ENCODE measurements at regions of chr11 and their contacts with region 1.

Region 1: DNA sequence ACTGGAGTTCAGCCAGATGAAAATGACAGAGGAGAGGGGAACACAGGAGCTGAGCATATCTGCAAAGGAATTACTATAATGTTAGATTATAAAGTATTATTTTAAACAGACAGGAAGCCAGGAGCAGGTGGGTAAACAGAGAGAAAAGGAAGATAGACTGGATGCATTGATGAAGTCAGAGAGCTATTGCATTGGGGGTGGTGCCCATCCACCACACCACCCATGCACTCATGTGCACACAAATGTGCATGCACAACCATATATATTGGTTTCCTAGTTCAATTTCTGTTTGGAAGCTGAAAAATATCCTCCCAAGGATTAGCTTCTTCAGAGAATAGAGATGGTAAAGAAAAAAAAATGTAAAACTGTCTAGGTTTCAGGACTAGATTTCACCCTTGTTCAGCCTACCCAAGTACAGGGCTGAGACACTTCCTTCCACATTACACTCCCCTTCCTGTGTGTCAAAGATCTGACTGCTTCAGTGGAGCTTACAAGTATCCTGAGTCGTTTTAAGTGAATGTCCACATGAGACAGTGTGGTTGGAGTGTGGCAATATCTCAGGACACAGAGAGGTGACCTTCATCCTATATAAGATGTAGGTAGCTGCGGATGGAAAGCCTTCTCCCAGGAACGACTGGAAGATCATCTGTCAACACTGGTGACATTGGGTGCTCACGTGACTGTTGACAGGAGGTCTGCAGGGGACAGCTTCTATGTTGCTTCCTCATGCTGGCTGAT is 12.2 kb upstream of the SMPD1 start:
- DNase-seq: peak; percentile 53
- ATAC-seq: peak; percentile 84
- H3K4me3 Mint-ChIP-seq: peak overlapping the region; percentile 55
- H3K27ac Mint-ChIP-seq: peak overlapping the region; percentile 91
- H3K4me1 Mint-ChIP-seq: peaks cover 39% of the 10 kb centered on the region
- H3K27me3 Mint-ChIP-seq: no peaks in the 10 kb centered on the region

Region 2: DNA sequence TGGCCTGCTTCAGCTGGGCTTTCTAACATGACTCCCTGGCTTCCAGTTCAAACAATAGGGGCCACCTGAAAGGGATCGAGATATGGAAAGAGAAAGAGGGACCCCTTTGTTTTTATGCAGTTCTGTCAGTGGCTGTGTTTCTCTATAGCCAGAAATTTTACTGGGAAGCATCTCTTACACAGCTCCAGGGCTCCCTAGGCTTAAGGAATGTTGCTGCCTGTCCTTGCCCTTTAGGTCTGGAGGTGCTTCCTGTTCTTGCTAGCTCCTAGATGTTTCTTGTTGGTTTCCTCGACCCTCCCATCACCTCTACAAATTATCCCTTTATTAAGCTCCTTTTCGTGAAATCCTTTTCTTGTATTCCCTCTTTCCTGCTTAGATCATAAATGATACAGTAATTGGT is 325.7 kb before region 1 on chr11:
- CTCF ChIA-PET with region 1: no interaction called
- POLR2A ChIA-PET with region 1: no interaction called
- DNase-seq: no peak
- ATAC-seq: no peak
- H3K4me3 Mint-ChIP-seq: no peak overlapping the region
- H3K27ac Mint-ChIP-seq: no peak overlapping the region
- H3K4me1 Mint-ChIP-seq: no peaks in the 10 kb centered on the region
- H3K27me3 Mint-ChIP-seq: peaks cover 13% of the 10 kb centered on the region

Region 3: GRCh38 chr11:6362873-6363678 is 15.0 kb before region 1 on chr11:
- CTCF ChIA-PET with region 1: interaction called, 108 read pairs
- POLR2A ChIA-PET with region 1: no interaction called
- DNase-seq: peak; percentile 81
- ATAC-seq: peak; percentile 96
- H3K4me3 Mint-ChIP-seq: no peak overlapping the region
- H3K27ac Mint-ChIP-seq: no peak overlapping the region
- H3K4me1 Mint-ChIP-seq: no peaks in the 10 kb centered on the region
- H3K27me3 Mint-ChIP-seq: peaks cover 2% of the 10 kb centered on the region

Region 4: DNA sequence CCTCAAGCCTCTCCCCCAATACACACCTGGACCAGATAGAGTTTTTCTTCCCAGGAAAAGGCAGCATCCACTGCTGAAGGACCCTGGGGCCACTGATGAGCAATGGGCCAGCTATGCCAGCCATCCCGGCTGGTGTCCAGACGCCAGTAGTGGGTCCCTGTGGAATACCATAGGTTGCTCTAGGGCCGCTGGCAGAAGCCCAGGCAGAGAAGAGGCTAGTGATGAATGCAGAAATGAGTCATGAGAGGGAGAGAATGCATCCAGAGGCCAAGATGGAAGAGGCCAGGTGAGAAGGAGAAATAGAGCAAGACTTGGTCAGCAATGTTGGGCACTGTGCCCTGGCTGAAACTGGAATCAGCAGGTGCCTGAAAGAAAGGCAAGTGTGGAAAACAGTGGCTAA is 53.8 kb after region 1 on chr11:
- CTCF ChIA-PET with region 1: interaction called, 657 read pairs
- POLR2A ChIA-PET with region 1: no interaction called
- DNase-seq: no peak
- ATAC-seq: no peak
- H3K4me3 Mint-ChIP-seq: no peak overlapping the region
- H3K27ac Mint-ChIP-seq: no peak overlapping the region
- H3K4me1 Mint-ChIP-seq: peaks cover 6% of the 10 kb centered on the region
- H3K27me3 Mint-ChIP-seq: peaks cover 15% of the 10 kb centered on the region

Region 5: DNA sequence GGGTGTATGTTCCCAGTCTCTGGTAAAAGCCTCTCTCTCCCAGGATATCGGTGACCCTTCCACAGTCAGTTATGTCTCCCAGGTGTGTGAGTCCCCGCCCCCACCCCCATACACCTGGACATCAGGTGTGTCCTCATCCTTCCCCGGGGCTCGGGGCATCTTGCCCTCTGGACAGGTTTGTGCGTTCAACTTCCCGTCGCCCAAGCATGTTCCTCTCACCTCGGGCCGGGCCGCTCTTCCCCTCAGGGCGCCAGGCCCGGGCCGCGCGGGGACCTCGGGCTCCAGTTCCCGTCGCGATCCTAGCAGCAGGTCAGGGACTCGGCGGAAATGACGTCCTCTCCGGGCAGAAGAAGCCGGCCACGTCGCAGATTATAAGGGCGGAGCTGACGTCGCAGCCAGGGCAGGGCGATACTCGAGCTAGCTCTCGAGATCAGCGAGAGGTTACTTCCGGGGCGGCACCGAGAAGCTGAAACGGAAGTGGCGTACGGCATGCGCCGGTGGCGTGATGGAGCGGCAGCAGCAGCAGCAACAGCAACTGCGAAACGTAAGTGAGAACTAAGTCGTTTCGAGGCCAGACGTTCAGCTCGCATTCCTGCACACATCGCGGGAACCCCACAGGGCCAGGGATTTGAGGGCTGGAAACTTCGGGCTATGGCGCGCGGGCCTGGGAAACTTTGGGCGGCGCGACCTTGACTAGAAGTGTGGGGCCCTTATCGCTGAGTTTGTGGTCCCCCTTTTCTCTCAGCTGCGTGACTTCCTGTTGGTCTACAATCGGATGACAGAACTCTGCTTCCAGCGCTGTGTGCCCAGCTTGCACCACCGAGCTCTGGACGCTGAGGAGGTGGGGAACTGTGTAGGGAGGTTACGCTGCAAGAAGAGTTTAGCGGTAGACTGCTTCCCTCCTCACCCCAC is 103.2 kb after region 1 on chr11 and contains the starts of genes ARFIP2 and TIMM10B:
- CTCF ChIA-PET with region 1: interaction called, 39 read pairs
- POLR2A ChIA-PET with region 1: interaction called, 21 read pairs
- DNase-seq: peak; percentile 99
- ATAC-seq: peak; percentile 96
- H3K4me3 Mint-ChIP-seq: peak within 1 kb of the TSS; percentile 94
- H3K27ac Mint-ChIP-seq: peak within 1 kb of the TSS; percentile 97
- H3K4me1 Mint-ChIP-seq: peaks cover 38% of the 10 kb centered on the region
- H3K27me3 Mint-ChIP-seq: no peaks in the 10 kb centered on the region
- total RNA-seq, gene ARFIP2: 38.6 to 39.8 TPM
- total RNA-seq, gene TIMM10B: 34.1 to 35.4 TPM

Region 6: DNA sequence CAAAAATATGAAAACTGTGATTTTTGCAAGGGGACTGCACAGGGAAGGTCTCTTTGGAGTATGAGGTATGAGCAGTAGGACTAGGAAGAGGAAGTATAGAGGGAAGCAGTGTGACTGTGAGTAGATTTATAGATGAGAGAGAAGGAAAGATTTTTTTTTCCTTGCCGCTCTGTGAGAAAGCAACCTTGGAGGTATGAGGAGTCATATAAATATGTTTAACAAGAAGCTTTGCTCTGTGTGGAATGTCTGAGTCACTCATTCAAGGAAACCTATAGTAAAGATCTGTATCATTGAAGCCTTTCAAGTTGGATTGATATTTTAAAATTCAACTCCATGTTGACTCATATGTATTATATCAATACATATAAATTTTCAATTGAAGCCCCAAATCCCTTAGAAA is 145.2 kb after region 1 on chr11:
- CTCF ChIA-PET with region 1: interaction called, 37 read pairs
- POLR2A ChIA-PET with region 1: no interaction called
- DNase-seq: no peak
- ATAC-seq: no peak
- H3K4me3 Mint-ChIP-seq: no peak overlapping the region
- H3K27ac Mint-ChIP-seq: no peak overlapping the region
- H3K4me1 Mint-ChIP-seq: peaks cover 39% of the 10 kb centered on the region
- H3K27me3 Mint-ChIP-seq: no peaks in the 10 kb centered on the region

Region 7: DNA sequence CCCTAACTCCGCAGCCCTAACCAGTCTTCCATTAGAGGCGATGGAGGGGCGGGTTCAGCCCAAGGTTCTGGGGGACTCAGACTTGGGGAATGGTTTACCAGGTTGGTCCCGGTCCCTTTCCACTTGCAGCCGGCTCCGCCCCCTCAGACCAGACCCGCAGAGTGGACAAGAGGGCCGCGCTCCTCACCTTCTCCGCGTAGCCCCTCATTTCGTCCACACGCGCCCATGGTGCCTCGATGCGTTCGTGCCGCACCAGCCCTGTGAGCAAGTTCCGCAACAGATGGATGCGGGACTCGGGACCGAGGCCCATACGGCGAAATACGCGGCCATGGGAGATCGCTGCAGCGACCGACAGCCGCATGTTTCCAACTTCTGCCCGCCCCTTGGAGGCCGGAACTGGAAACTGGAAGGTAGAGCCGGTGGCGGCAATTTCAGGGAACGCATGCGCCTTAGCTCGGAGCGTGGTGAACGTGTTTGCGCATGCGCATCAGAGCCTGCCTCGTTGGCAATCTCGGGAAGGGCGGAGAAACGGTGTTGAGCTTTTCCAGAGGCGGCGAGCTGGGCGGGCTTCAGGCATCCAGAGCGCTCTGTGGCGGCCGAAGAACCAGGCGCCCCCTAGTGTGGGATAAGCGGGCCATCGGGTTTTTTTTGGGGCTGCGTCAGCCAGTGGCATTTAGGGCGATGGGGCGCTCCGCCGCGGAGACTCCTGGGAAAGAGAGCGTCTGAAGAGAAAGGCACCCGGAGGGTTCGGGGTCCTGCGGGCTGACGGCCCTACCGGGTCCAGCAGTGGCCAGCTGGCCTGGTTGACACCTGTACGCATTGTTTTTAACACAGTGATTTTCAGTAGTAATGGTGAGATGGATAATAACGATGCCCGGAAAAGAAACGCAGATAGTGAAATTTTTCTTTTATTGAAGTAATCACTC is 305.1 kb after region 1 on chr11 and contains the start of gene MRPL17:
- CTCF ChIA-PET with region 1: interaction called, 29 read pairs
- POLR2A ChIA-PET with region 1: interaction called, 7 read pairs
- DNase-seq: peak; percentile 100
- ATAC-seq: peak; percentile 98
- H3K4me3 Mint-ChIP-seq: peak within 1 kb of the TSS; percentile 99
- H3K27ac Mint-ChIP-seq: peak within 1 kb of the TSS; percentile 97
- H3K4me1 Mint-ChIP-seq: peaks cover 28% of the 10 kb centered on the region
- H3K27me3 Mint-ChIP-seq: no peaks in the 10 kb centered on the region
- total RNA-seq, gene MRPL17: 60.6 to 69.2 TPM